AG04450 (cell line): ENCODE measurements at regions of chr15 and their contacts with region 1.

Region 1: GRCh38 chr15:75453703-75454470 is 2.4 kb upstream of the SIN3A start:
- DNase-seq: peak; percentile 100
- H3K4me3 ChIP-seq: peak overlapping the region; percentile 85
- H3K27ac ChIP-seq: peak overlapping the region; percentile 98
- H3K27me3 ChIP-seq: no peaks in the 10 kb centered on the region
- CTCF ChIP-seq: no peak

Region 2: DNA sequence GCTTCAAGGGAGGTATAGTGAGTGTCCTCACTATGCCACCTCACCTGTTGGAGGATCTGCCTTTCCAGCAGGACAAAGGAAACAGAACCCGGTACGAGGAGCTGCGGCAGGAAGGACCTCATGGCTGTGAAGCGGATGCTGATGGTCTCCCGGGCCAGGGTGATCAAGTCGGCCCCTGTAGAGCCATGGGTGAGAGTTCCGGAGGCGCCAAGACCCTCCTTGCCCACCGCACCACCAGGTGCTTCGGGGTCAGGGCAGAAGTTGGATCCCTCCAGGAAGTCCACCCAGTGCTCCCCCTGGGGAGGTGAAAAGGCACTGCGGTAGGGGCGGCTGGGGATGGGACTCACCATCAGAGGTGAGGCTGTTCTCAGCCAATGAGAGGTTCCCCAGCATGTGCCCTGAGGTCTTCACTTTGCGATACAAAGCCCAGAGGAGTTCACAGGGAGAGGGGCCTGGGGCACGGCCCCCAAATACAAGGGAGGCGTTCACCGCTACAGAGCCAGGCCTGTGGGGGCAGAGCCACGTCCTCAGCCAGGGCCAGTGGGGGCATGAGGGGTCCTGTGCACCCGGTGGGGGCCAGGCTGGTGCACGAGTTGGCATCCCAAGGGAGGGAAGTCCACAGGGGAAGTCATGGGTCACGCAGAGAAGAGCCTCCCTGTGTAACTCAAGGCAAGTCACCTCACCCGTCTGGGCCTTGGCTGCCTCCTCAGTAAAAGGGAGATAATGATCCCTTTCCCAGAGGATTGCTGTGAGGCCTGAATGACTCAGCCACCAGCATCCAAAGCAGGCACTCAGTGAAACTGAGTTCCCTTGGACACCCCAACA is 224.5 kb before region 1 on chr15:
- CTCF ChIA-PET with region 1: no interaction called
- POLR2A ChIA-PET with region 1: no interaction called
- DNase-seq: no peak
- H3K4me3 ChIP-seq: no peak overlapping the region
- H3K27ac ChIP-seq: no peak overlapping the region
- H3K27me3 ChIP-seq: peaks cover 43% of the 10 kb centered on the region
- CTCF ChIP-seq: no peak

Region 3: DNA sequence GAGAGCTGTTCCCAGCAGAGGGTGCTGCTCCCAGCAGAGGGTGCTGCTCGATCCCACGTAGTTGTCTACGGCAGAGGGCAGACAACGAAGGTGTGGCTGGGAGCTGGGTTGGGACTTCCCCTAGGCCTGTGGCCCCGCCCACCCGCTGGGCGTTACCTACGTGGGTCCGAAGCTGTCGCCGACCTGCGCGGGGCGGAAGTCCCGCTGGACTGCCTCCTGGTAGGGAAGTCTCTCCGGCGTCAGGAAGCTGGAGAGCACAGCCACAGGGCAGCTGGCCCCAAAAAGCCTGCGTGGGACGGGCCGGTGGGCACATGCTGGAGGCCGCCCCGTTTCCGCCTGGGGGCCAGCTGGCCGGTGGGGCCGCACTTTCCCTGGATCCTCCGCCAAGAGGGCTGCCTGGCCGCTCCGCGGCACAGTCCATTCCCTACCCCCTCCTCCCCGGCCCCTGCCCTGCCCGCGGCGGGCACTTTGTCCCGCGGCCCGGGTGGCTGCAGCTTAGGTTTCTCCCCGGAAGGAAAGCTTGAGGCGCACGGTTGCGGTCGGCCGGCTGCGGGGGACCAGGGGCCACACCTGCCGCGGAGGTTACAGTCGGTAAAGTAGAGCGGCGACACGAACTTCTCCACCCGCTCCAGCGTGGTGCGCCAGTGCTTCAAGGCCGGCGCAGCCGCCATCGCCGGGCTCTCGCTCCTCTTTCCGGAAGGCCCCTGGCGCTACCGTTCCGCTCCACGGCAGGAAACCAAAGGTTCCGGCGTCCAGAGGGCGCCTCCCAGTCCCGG is 85.8 kb before region 1 on chr15 and contains the start of gene MAN2C1:
- CTCF ChIA-PET with region 1: interaction called, 35 read pairs
- POLR2A ChIA-PET with region 1: interaction called, 25 read pairs
- DNase-seq: peak; percentile 84
- H3K4me3 ChIP-seq: peak within 1 kb of the TSS; percentile 83
- H3K27ac ChIP-seq: peak within 1 kb of the TSS; percentile 93
- H3K27me3 ChIP-seq: no peaks in the 10 kb centered on the region
- CTCF ChIP-seq: peak; percentile 76
- polyA plus RNA-seq, gene MAN2C1: 32.5 and 37.9 TPM in 2 replicates

Region 4: DNA sequence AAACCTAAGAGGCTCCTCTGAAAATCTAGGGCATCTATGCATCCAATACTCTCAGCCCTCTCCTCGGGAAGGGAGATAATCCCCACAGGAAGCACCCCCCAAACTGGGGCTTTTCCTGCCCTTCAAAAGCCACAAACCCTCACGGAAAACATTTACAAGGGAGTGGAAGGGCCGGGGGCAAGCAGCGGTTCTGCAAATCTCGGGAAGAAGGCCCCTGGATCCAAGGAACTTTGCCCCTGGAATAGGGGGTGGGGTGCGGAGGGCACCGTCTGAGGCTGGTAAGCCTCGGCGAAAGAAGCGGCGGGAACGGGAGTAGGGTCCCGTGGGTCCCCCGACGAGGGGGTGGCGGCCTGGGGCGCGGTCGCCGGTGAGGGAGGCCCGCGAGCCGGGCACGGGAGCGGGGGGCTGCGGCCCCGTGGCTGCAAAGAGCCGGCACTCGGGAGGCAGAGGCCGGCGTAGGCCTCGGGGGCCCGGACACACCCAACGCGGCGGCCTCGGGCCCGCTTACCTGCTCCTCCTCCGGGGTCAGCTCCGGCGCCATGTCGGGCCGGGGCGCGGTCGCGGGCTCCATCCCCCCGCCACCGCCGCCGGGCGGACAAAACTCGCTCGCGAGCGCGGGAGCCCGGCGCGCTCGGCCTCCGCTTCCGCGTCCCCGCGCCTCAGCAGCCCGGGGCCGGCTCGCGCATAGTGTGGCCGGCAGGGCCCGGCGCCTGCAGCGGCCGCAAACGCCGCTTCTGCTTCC is 124.5 kb after region 1 on chr15:
- CTCF ChIA-PET with region 1: no interaction called
- POLR2A ChIA-PET with region 1: interaction called, 11 read pairs
- DNase-seq: no peak
- H3K4me3 ChIP-seq: peak overlapping the region; percentile 83
- H3K27ac ChIP-seq: peak overlapping the region; percentile 52
- H3K27me3 ChIP-seq: no peaks in the 10 kb centered on the region
- CTCF ChIP-seq: no peak